ENCODE measurements at regions of chr2 and their contacts with region 1.

Region 1: GRCh38 chr2:235595422-235596010 is 101.7 kb downstream of the AGAP1 start:
- DNase-seq: peak in 1 of 3 donors; percentile 51
- ATAC-seq: peak; percentile 74 to 86 (median 79)
- H3K4me3 ChIP-seq: no peak overlapping the region
- H3K27ac ChIP-seq: no peak overlapping the region
- H3K4me1 ChIP-seq: no peaks in the 10 kb centered on the region
- H3K27me3 ChIP-seq: no peaks in the 10 kb centered on the region
- CTCF ChIP-seq: peak; percentile 73 to 84 (median 81)
- POLR2A ChIP-seq: no peak

Region 2: DNA sequence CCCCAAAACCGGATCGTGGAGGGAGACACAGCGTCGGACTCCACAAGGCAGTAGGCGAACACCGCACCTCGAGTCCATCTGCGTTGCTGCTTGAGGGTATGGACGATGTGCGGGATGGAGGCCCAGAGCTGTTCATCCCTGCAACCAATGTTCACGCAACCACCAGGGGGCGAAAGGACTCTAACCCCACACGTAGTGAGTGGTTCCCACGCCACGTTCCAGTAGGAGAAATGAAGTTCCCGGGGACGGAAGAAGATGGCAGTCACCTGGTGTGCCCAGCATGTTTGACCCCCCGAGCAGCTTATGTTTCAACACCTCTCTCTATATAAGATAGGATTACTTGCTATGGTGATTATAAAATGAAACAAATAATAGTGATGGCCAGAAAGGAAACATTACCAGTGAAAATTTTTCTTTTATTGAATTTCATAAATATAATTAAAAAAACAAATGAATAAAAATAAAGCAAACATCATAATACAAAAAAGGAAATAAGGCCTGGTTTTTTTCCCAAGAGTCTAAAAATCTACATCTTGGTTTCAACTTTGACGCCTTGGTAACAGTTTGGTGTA is 459.4 kb before region 1 on chr2:
- intact Hi-C with region 1: loop called (anchors 10 kb)
- DNase-seq: peak; percentile 74 to 80 (median 74)
- ATAC-seq: peak; percentile 85 to 93 (median 90)
- H3K4me3 ChIP-seq: no peak overlapping the region
- H3K27ac ChIP-seq: no peak overlapping the region
- H3K4me1 ChIP-seq: no peaks in the 10 kb centered on the region
- H3K27me3 ChIP-seq: no peaks in the 10 kb centered on the region
- CTCF ChIP-seq: peak; percentile 61 to 77 (median 72)
- POLR2A ChIP-seq: no peak

Region 3: GRCh38 chr2:235149240-235149659 is 446.3 kb before region 1 on chr2:
- intact Hi-C with region 1: loop called in 1 of 2 experiments (anchors 10 kb)
- DNase-seq: peak in 1 of 3 donors; percentile 3
- ATAC-seq: no peak
- H3K4me3 ChIP-seq: no peak overlapping the region
- H3K27ac ChIP-seq: no peak overlapping the region
- H3K4me1 ChIP-seq: no peaks in the 10 kb centered on the region
- H3K27me3 ChIP-seq: no peaks in the 10 kb centered on the region
- CTCF ChIP-seq: no peak
- POLR2A ChIP-seq: no peak

Region 4: GRCh38 chr2:235746257-235747084 is 151.0 kb after region 1 on chr2:
- intact Hi-C with region 1: loop called (anchors 5 to 10 kb)
- DNase-seq: peak in 1 of 3 donors; percentile 65
- ATAC-seq: peak; percentile 92 to 98 (median 94)
- H3K4me3 ChIP-seq: no peak overlapping the region
- H3K27ac ChIP-seq: no peak overlapping the region
- H3K4me1 ChIP-seq: peaks cover 0 to 4% (median 0%) of the 10 kb centered on the region in 4 donors
- H3K27me3 ChIP-seq: no peaks in the 10 kb centered on the region
- CTCF ChIP-seq: peak; percentile 57 to 84 (median 78)
- POLR2A ChIP-seq: no peak